ENCODE measurements at regions of chr11 and their contacts with region 1.

Region 1: GRCh38 chr11:103601225-103601846 is 435.1 kb upstream of the DDI1 start:
- DNase-seq: peak in 5 of 10 donors; percentile 22 to 50 (median 26)

Region 2: DNA sequence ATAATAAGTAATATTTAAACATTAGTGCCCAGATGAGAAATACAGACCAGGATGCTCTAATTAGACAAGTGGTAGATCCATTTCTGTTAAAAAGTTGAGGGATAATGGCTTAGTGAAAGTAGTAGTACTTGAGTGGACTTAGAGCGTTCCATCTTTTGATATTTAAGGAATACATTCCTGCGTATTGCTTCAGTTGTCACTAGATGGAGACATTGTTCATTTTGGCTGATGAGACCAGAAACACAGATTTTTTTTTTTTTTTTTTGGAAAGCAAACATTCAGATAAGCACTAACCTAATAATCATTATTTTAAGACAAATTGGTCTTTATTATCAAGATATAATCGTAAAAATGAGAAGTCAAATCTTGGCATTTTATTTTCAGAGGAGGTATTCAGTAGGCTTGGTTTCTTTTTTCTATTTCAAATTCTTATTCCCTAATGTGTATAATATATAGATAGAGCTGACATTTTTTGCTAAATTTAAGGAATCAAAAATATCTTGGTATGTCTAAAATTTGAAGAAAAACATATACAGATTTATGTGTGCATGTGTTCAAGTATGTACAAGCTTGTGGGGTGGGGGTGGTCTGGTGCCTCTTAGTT is 399.2 kb before region 1 on chr11:
- intact Hi-C with region 1: loop called (anchors 1 kb)
- DNase-seq: no peak

Region 3: GRCh38 chr11:103326070-103326794 is 275.1 kb before region 1 on chr11:
- intact Hi-C with region 1: loop called (anchors 5 kb)
- DNase-seq: peak in 3 of 10 donors; percentile 6 to 73 (median 64)

Region 4: DNA sequence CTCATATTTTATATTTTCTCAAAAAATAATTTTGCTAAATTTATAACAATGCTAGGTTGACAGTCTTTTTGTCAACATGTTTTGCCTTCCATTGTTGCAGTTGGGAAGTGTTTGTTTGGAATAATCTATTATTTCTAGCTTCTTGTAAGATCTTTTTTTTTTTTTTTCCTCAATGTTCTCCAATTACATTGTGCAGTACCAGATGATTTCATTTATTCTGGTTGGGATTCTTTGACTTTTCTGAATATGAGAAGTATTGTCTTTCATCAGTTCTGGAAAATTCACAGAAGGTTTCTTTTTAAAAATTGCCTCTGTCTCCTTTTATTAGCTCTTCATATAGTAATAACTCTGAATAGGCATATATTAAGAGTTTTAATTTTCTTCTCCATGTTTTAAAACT is 246.7 kb before region 1 on chr11:
- intact Hi-C with region 1: no loop called
- DNase-seq: no peak

Measured in posterior cingulate gyrus (tissue), 11 donors.